OCI-LY7 (cell line): ENCODE measurements at regions of chr17 and their contacts with region 1.

Region 1: GRCh38 chr17:44919885-44920564 is 4.7 kb upstream of the GFAP start:
- DNase-seq: peak; percentile 79
- H3K4me3 ChIP-seq: no peak overlapping the region
- H3K27ac ChIP-seq: no peak overlapping the region
- H3K4me1 ChIP-seq: peaks cover 23% of the 10 kb centered on the region
- CTCF ChIP-seq: peak; percentile 84

Region 2: GRCh38 chr17:45098869-45099616 is 179.0 kb after region 1 on chr17:
- CTCF ChIA-PET with region 1: no interaction called
- POLR2A ChIA-PET with region 1: no interaction called
- intact Hi-C with region 1: loop called (anchors 2 kb)
- DNase-seq: peak; percentile 78
- H3K4me3 ChIP-seq: no peak overlapping the region
- H3K27ac ChIP-seq: no peak overlapping the region
- H3K4me1 ChIP-seq: no peaks in the 10 kb centered on the region
- CTCF ChIP-seq: peak; percentile 94

Region 3: DNA sequence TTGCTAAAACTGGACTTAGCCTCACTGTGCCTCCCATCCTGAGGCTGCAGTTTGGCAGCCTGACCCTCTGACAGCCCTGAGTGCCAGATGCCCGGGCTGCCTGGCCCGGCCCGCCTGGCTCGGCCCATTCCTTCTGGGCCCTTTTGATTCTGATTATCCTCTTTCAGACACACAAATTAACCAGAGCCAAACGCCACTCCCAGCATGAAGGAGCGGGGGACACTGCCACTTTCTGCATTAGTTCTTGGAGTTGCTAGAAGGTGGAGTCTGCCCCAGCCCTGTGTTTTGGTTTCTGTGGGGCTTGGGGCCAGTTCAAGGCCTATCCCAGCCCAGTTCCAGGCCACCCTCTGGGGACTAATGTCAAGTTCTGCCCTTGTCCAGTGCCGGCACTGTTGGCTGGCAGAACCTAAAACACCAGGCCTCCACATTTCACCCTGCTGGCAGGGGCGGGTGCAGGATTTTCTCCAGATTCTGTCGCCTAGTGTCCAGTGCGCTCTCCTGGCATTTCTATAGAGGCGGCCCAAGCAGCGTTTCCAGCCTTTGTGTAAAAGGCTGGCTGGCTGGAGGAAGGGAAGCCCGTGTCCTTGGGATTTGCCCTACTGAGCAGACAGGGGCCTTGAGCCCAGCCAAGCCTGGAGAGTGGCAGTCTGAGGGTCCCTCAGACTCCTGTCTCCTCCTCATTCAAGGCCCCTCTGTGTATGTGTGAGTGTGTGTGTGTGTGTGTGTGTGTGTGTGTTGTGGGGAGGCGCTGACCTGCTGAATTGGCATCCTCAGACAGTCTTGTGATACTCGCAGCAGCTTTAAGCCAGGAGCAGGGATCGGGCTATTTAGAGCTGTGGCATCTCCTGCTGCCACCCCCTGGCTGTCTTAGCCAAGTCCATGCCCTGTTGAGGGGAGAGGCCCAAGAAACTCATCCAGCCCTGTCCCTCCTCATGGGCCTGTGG is 190.9 kb after region 1 on chr17:
- CTCF ChIA-PET with region 1: no interaction called
- POLR2A ChIA-PET with region 1: no interaction called
- intact Hi-C with region 1: no loop called
- DNase-seq: no peak
- H3K4me3 ChIP-seq: no peak overlapping the region
- H3K27ac ChIP-seq: no peak overlapping the region
- H3K4me1 ChIP-seq: peaks cover 13% of the 10 kb centered on the region
- CTCF ChIP-seq: no peak